Psoas muscle (tissue), 8 donors: ENCODE measurements at regions of chr6 and their contacts with region 1.

Region 1: DNA sequence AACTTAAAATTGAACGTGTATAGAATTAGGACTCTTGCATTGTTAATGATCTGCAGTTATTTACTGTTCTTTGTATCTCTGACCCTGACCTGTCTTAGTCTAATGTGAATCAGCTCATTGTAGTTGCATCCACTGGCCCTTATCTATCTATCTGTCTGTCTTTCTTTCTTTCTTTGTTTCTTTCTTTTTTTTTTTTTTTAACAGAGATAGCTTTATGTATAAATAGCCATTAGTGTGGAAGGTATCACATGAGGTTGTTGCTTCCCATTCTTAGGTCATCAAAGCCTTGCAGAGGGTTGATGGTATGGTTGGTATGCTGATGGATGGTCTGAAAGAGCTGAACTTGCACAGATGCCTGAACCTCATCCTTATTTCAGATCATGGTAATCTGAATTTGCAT is 59.9 kb downstream of the ENPP1 start:
- DNase-seq: no peak
- ATAC-seq: no peak
- H3K4me3 ChIP-seq: no peak overlapping the region
- H3K27ac ChIP-seq: no peak overlapping the region
- H3K4me1 ChIP-seq: no peaks in the 10 kb centered on the region
- H3K27me3 ChIP-seq: no peaks in the 10 kb centered on the region
- CTCF ChIP-seq: no peak

Region 2: DNA sequence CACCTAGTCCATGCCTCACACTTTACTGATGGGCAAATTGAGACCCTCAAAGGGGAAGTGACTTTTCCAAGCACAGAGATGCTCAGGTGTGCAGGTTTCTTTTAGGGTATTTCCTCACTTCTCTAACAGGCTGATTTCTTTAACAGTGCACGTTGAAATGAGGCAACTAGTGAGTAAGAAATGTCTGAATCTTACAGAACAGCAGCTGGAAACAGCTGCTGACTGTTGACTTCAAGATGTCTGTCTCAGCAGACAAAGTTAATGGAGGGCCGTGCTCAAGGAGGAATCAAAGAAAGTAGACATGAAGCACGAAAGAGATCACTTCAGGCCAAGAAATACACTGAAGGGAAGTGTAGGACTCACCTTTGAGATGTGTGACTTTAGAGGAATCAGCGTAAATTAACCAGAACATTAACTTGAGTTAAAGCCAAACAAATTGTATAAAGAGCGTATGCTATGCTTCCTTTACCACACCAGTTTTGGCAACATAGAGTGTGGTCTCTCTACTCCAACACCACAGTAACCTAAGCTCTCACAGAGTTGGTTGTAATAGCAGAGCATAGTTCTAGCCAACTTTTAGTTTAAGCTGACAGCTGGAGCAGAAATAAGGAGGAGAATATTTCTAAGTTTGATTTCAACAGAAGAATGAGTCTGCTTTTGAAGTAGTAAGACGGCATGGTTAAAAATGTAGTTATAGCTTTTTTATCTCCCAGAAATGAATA is 1705.9 kb before region 1 on chr6:
- intact Hi-C with region 1: loop called in 1 of 2 experiments (anchors 5 kb)
- DNase-seq: no peak
- ATAC-seq: no peak
- H3K4me3 ChIP-seq: no peak overlapping the region
- H3K27ac ChIP-seq: no peak overlapping the region
- H3K4me1 ChIP-seq: no peaks in the 10 kb centered on the region
- H3K27me3 ChIP-seq: no peaks in the 10 kb centered on the region
- CTCF ChIP-seq: no peak

Region 3: GRCh38 chr6:131029626-131030297 is 838.0 kb before region 1 on chr6:
- intact Hi-C with region 1: no loop called
- DNase-seq: no peak
- ATAC-seq: peak in 2 of 4 donors; percentile 16 to 63
- H3K4me3 ChIP-seq: no peak overlapping the region
- H3K27ac ChIP-seq: no peak overlapping the region
- H3K4me1 ChIP-seq: peaks cover 30% of the 10 kb centered on the region
- H3K27me3 ChIP-seq: no peaks in the 10 kb centered on the region
- CTCF ChIP-seq: no peak

Region 4: GRCh38 chr6:131803007-131803769 is 64.6 kb before region 1 on chr6:
- intact Hi-C with region 1: no loop called
- DNase-seq: no peak
- ATAC-seq: no peak
- H3K4me3 ChIP-seq: no peak overlapping the region
- H3K27ac ChIP-seq: no peak overlapping the region
- H3K4me1 ChIP-seq: peaks cover 4% of the 10 kb centered on the region
- H3K27me3 ChIP-seq: no peaks in the 10 kb centered on the region
- CTCF ChIP-seq: no peak